A549 (cell line): ENCODE measurements at regions of chr7 and their contacts with region 1.

Region 1: DNA sequence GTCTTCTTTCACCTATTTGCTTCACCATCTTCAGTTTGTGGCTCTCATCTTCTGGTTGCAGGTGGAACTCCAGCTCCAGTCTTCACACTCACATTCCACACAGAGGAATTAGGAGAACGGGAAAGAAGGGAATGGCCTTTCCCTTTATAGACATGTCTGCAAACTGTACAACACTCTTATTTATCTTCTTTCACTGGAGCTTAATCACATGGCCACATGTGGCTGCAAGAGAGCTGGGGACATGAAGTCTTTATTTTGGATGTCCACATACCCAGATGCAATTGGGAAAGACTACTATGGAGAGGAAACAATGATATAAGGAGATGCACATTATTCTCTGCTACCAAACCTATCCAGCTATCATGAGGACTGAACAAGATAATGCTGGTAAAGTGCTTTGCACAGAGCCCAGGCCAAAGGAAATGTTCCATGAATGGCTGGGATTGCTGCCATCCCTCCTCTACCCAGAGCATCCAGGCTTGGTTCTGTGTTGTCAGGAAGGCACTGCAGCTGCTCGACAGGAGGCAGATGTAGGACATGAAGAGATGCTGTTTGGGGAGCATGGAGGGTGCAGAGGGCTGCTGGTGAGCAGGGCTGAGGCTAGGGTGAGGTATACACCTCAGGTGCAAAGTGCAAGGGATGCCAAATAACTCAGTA is 183.8 kb upstream of the TBX20 start:
- DNase-seq: no peak
- ATAC-seq: no peak
- H3K4me3 ChIP-seq: no peak overlapping the region
- H3K27ac ChIP-seq: no peak overlapping the region
- H3K4me1 ChIP-seq: no peaks in the 10 kb centered on the region
- CTCF ChIP-seq: no peak
- EP300 ChIP-seq: no peak
- POLR2A ChIP-seq: no peak
- RAD21 ChIP-seq: no peak

Region 2: GRCh38 chr7:35391091-35391490 is 46.7 kb before region 1 on chr7:
- CTCF ChIA-PET with region 1: no interaction called
- POLR2A ChIA-PET with region 1: no interaction called
- DNase-seq: no peak
- ATAC-seq: no peak
- H3K4me3 ChIP-seq: no peak overlapping the region
- H3K27ac ChIP-seq: no peak overlapping the region
- H3K4me1 ChIP-seq: no peaks in the 10 kb centered on the region
- CTCF ChIP-seq: no peak
- EP300 ChIP-seq: no peak
- POLR2A ChIP-seq: no peak
- RAD21 ChIP-seq: no peak

Region 3: GRCh38 chr7:35424869-35425495 is 12.8 kb before region 1 on chr7:
- CTCF ChIA-PET with region 1: interaction called, 17 read pairs
- POLR2A ChIA-PET with region 1: no interaction called
- DNase-seq: peak; percentile 51 to 61
- ATAC-seq: peak; percentile 88 to 90; a peak in 5 of 6 replicates
- H3K4me3 ChIP-seq: no peak overlapping the region
- H3K27ac ChIP-seq: no peak overlapping the region
- H3K4me1 ChIP-seq: no peaks in the 10 kb centered on the region
- CTCF ChIP-seq: peak; percentile 79
- EP300 ChIP-seq: no peak
- POLR2A ChIP-seq: no peak
- RAD21 ChIP-seq: peak; percentile 65